ENCODE measurements at regions of chr3 and their contacts with region 1.

Region 1: DNA sequence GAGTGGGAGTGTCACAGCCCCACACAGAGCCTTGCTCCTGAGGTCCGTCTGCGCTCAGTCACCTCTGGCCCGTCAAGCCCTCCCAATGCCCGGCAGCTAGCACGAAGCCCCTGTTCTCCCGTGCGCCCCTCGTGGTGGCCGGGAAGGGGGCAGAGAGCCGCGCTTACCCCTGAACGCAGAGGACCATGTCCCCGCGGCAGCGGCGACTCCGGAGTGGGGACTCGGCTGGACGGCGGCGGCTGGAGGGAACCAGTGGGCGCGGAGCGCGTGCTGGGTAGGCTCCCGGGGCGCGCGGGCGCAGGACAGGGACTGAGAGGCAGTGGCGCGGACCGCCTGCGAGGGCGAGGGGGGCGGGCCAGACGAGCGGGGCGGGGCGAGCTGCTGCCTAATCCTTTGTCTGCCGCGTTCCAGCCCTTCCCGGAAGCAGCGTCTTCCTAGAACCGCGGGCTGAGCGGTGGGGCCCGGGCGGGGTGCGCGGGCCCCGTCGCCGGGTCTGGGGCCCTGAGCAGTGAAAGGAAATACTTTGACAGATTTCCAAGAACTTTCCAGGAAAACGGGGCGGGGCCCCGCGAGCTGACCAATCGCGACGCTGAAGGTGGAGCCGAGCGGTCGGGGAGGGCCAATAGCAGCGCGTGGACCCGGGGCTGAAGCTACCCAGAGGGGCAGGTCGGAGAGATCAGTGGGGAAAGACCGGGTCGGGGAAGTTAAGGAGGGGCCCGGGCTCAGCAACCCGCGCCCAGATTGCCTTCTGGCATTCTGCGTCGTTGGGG is at the start of gene CISH:
- DNase-seq: peak; percentile 90 to 94 (median 93)
- H3K4me3 ChIP-seq: peak within 1 kb of the TSS; percentile 93 to 96
- H3K4me3 Mint-ChIP-seq: peak within 1 kb of the TSS; percentile 92 to 99 (median 96)
- H3K27ac ChIP-seq: peak within 1 kb of the TSS; percentile 81
- H3K27ac Mint-ChIP-seq: peak within 1 kb of the TSS; percentile 90 to 97 (median 94)
- H3K4me1 ChIP-seq: peaks cover 66% of the 10 kb centered on the region
- H3K4me1 Mint-ChIP-seq: peaks cover 44 to 80% (median 63%) of the 10 kb centered on the region in 4 donors
- H3K27me3 ChIP-seq: no peaks in the 10 kb centered on the region
- H3K27me3 Mint-ChIP-seq: no peaks in the 10 kb centered on the region
- total RNA-seq, gene CISH: 14.7 to 15.2 TPM

Region 2: DNA sequence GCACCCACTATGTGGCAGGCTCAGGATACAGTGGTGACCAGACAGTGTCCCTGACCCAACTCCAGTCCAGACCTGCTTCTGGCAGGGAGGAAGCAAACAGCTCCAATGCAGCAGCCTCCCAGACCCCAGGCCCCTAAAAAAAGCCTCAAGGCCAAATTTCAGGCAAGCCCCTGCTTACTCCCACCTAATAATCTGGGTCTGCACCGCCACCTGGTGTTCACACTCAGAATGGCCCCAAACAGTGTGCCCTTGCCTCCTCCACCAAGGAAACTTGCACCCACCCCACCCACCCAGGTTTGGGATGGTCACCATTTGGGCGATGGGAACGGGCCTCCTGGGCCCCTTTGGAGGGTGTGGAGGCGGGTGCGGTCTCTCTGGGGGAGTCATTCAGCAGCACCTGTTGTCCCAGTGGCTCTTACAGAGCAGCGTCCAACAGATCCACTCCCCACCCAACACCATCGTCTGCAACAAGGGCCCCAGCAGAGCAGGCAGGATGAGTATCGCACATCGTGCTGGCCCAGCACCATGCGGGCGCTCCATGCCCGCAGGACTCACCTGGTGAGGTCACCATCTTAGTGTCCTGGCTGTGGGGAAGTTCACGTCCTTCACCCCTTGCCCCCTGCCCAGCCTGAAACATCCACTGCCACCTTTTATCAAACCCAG is 61.4 kb before region 1 on chr3:
- CTCF ChIA-PET with region 1: interaction called, 15 read pairs
- POLR2A ChIA-PET with region 1: no interaction called
- intact Hi-C with region 1: no loop called
- DNase-seq: peak; percentile 38 to 62 (median 45)
- H3K4me3 ChIP-seq: no peak overlapping the region
- H3K4me3 Mint-ChIP-seq: no peak overlapping the region
- H3K27ac ChIP-seq: no peak overlapping the region
- H3K27ac Mint-ChIP-seq: no peak overlapping the region
- H3K4me1 ChIP-seq: no peaks in the 10 kb centered on the region
- H3K4me1 Mint-ChIP-seq: no peaks in the 10 kb centered on the region
- H3K27me3 ChIP-seq: no peaks in the 10 kb centered on the region
- H3K27me3 Mint-ChIP-seq: no peaks in the 10 kb centered on the region

Region 3: DNA sequence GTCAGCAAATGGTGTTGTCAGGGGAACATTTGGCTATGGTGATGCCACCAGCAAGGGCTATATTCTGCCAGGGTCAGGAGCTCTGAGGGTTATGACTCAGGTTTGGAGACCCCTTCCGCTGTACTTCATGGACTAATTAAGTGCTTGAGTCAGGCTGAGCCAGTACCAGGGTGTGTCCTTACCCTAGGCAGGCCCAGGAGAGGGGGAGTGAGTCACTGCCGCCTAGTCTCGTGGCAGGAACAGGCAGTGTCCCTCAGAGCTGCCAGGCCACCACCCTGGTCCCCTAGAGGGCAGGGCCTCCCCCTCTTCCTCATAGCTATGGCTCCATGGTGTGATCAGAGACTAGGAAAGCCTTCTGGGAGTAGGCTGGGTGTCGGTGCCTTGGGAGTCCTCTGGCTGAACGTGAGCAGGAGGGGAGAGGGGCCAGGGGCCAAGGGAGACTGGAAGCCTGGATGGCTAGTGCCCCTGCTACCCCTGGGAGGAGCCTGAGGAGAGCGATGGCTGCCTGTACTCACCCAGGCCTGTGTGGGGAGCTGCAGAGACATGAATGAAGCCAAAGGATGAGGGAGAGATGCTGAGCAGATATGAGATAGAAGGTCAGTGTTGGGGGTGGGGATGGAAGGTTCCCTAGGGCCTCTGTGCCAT is 15.9 kb after region 1 on chr3:
- CTCF ChIA-PET with region 1: interaction called, 43 read pairs
- POLR2A ChIA-PET with region 1: interaction called, 43 read pairs
- intact Hi-C with region 1: no loop called
- DNase-seq: no peak
- H3K4me3 ChIP-seq: no peak overlapping the region
- H3K4me3 Mint-ChIP-seq: peak overlapping the region in 3 of 8 donors; percentile 25 to 44 (median 29)
- H3K27ac ChIP-seq: no peak overlapping the region
- H3K27ac Mint-ChIP-seq: peak overlapping the region in 6 of 7 donors; percentile 8 to 88 (median 72)
- H3K4me1 ChIP-seq: peaks cover 100% of the 10 kb centered on the region
- H3K4me1 Mint-ChIP-seq: peaks cover 74 to 100% (median 88%) of the 10 kb centered on the region in 4 donors
- H3K27me3 ChIP-seq: no peaks in the 10 kb centered on the region
- H3K27me3 Mint-ChIP-seq: no peaks in the 10 kb centered on the region

Region 4: GRCh38 chr3:51024765-51025632 is 413.4 kb after region 1 on chr3:
- CTCF ChIA-PET with region 1: interaction called, 8 read pairs
- POLR2A ChIA-PET with region 1: interaction called, 14 read pairs
- intact Hi-C with region 1: loop called (anchors 2 kb)
- DNase-seq: peak; percentile 82 to 93 (median 86)
- H3K4me3 ChIP-seq: peak overlapping the region; percentile 39 to 50
- H3K4me3 Mint-ChIP-seq: peak overlapping the region; percentile 68 to 91 (median 81)
- H3K27ac ChIP-seq: peak overlapping the region; percentile 60
- H3K27ac Mint-ChIP-seq: peak overlapping the region; percentile 92 to 98 (median 95)
- H3K4me1 ChIP-seq: peaks cover 45% of the 10 kb centered on the region
- H3K4me1 Mint-ChIP-seq: peaks cover 42 to 69% (median 50%) of the 10 kb centered on the region in 4 donors
- H3K27me3 ChIP-seq: no peaks in the 10 kb centered on the region
- H3K27me3 Mint-ChIP-seq: peaks cover 0 to 1% of the 10 kb centered on the region in 2 donors

Region 5: GRCh38 chr3:51384726-51385473 is 773.3 kb after region 1 on chr3 and contains the start of gene MANF:
- CTCF ChIA-PET with region 1: interaction called, 20 read pairs
- POLR2A ChIA-PET with region 1: interaction called, 31 read pairs
- intact Hi-C with region 1: loop called (anchors 1 kb)
- DNase-seq: peak; percentile 97 to 98 (median 98)
- H3K4me3 ChIP-seq: peak within 1 kb of the TSS; percentile 61 to 93
- H3K4me3 Mint-ChIP-seq: peak within 1 kb of the TSS; percentile 98 to 99 (median 99)
- H3K27ac ChIP-seq: peak within 1 kb of the TSS; percentile 92
- H3K27ac Mint-ChIP-seq: peak within 1 kb of the TSS; percentile 98 to 100 (median 99)
- H3K4me1 ChIP-seq: peaks cover 38% of the 10 kb centered on the region
- H3K4me1 Mint-ChIP-seq: peaks cover 25 to 62% (median 42%) of the 10 kb centered on the region in 4 donors
- H3K27me3 ChIP-seq: no peaks in the 10 kb centered on the region
- H3K27me3 Mint-ChIP-seq: no peaks in the 10 kb centered on the region
- total RNA-seq, gene MANF: 74.8 to 79.0 TPM

Measured in CD4-positive, alpha-beta memory T cell (primary cell).